Activated CD4-positive, alpha-beta T cell treated with anti-CD3 and anti-CD28 coated beads for 36 hours (primary cell): ENCODE measurements at regions of chr19 and their contacts with region 1.

Region 1: DNA sequence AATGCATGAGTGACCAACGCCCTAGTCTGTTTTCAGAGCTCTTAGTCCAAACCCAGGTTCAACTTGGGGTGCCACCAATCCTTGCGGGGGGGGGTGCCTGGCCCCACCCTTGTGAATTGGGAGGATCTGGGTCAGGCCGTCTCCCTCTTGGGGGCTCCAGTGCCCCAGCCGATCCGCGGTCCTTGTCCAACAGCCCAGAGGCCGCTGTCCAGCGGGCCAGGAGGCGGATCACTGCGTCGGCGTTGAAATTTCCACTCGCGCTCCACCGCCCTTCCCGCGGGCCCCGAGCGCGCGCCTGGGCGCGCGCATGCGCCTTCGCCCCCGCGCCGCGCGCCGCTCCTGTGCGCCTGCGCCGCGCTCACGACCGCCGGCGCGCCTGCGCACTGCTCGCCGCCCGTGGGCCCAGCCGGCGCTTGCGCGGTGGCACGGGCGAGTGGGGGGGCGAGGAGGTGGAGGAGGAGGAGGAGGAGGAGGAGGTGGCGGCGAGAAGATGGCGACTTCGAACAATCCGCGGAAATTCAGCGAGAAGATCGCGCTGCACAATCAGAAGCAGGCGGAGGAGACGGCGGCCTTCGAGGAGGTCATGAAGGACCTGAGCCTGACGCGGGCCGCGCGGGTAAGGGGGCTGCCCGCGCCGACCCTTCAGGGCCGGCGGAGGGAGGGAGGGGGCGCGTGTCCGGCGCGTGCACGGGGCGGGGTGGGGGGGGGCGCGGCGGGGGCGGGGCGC is at the start of gene CRTC1:
- DNase-seq: peak; percentile 95
- ATAC-seq: peak; percentile 91
- H3K4me3 Mint-ChIP-seq: peak within 1 kb of the TSS; percentile 83
- H3K27ac Mint-ChIP-seq: peak within 1 kb of the TSS; percentile 89
- H3K4me1 Mint-ChIP-seq: peaks cover 16% of the 10 kb centered on the region
- H3K27me3 Mint-ChIP-seq: no peaks in the 10 kb centered on the region
- total RNA-seq, gene CRTC1: 5.3 to 9.7 TPM

Region 2: DNA sequence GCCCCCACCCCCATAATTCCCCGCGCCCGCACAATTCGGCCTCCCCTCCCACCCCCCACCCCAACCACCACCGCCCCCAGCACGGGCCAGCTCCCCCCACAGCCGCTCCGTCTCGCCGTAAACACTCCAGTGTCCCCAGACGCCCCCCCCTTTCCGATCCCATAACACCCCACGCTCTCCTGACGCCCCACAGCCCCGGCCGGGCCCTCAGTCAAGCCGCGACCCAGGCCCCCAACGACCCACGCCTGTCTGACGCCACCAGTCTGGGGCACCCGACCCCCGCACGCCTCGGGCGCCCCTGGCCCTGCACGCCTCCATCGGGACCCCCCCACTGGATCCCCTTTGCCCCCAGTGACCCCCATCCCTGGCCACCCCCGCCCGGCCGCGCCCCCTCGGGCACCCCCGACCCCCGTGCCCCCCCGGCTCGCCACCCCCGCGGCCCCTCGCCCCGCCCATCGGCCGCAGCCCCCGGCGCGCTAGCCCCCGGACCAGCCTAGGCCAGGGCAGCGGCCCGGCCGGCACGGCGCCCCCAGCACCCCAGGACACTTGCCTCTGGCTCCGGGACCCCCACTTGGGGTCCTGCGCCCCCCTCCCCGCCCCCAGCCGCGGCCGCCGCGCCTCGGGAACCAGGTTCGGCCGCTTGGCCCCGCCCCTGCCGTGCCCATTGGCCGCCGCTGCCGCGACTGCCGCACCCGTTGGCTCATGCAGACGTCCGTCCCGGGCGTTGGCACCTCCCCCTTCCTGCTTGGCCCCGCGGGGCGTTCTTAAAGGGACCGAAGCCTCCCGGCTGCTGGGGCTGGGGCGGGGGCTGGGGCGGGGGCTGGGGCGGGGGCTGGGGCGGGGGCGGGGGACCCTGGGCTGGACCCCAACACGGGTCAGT is 140.2 kb before region 1 on chr19 and contains the start of gene FKBP8:
- CTCF ChIA-PET with region 1: no interaction called
- POLR2A ChIA-PET with region 1: no interaction called
- intact Hi-C with region 1: loop called in 1 of 2 experiments (anchors 1 kb)
- DNase-seq: peak; percentile 98
- ATAC-seq: peak; percentile 92
- H3K4me3 Mint-ChIP-seq: peak within 1 kb of the TSS; percentile 92
- H3K27ac Mint-ChIP-seq: peak within 1 kb of the TSS; percentile 98
- H3K4me1 Mint-ChIP-seq: peaks cover 25% of the 10 kb centered on the region
- H3K27me3 Mint-ChIP-seq: no peaks in the 10 kb centered on the region
- total RNA-seq, gene FKBP8: 208 to 211 TPM

Region 3: GRCh38 chr19:18612772-18613588 is 70.4 kb before region 1 on chr19 and contains the start of gene TMEM59L:
- CTCF ChIA-PET with region 1: no interaction called
- POLR2A ChIA-PET with region 1: no interaction called
- intact Hi-C with region 1: no loop called
- DNase-seq: peak; percentile 70
- ATAC-seq: peak; percentile 53
- H3K4me3 Mint-ChIP-seq: peak within 1 kb of the TSS; percentile 57
- H3K27ac Mint-ChIP-seq: no peak within 1 kb of the TSS
- H3K4me1 Mint-ChIP-seq: peaks cover 16% of the 10 kb centered on the region
- H3K27me3 Mint-ChIP-seq: peaks cover 64% of the 10 kb centered on the region
- total RNA-seq, gene TMEM59L: 0.11 TPM in 1 of 2 experiments, not detected in the other

Region 4: DNA sequence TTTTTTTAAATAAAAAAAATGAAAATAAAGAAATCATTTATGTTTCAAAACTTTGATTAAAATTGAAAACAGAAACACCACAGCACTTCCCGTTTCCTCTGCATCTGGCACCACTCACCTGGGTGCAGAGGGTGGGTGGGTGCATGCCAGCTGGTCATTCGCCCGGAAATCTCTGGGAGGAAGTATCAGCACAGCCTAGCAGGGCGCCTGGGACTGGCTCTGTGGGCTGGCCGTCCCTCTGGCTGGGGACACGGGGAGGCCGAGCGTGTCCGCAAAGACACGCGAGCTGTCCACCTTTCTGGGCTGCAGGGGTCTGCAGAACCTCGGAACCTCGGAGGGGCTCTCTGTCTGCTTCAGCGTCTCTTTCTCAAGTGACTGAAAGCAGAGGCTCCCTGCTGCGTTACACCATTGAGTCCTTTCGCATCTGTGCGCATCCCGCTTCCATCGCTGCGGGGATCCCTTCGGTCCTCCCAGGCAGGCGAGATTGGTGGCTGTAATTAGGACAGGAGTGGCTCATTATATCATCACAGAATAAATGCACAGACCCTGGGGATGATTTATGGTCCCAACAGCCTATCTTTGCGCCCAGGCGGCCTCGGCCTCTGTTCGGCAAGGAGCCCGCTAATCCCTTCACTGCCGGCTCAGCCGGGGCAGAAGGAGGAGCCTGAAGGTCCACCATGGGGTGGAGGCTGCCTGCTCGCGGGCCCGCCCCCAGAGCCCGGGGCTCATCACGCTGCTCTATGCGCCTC is 17.3 kb after region 1 on chr19:
- CTCF ChIA-PET with region 1: no interaction called
- POLR2A ChIA-PET with region 1: no interaction called
- intact Hi-C with region 1: loop called in 1 of 2 experiments (anchors 1 kb)
- DNase-seq: peak; percentile 84
- ATAC-seq: peak; percentile 94
- H3K4me3 Mint-ChIP-seq: peak overlapping the region; percentile 64
- H3K27ac Mint-ChIP-seq: no peak overlapping the region
- H3K4me1 Mint-ChIP-seq: peaks cover 31% of the 10 kb centered on the region
- H3K27me3 Mint-ChIP-seq: no peaks in the 10 kb centered on the region

Region 5: GRCh38 chr19:18831524-18832305 is 148.3 kb after region 1 on chr19 and contains the start of gene UPF1:
- CTCF ChIA-PET with region 1: no interaction called
- POLR2A ChIA-PET with region 1: no interaction called
- intact Hi-C with region 1: loop called in 1 of 2 experiments (anchors 1 kb)
- DNase-seq: peak; percentile 98
- ATAC-seq: peak; percentile 82
- H3K4me3 Mint-ChIP-seq: peak within 1 kb of the TSS; percentile 96
- H3K27ac Mint-ChIP-seq: peak within 1 kb of the TSS; percentile 90
- H3K4me1 Mint-ChIP-seq: peaks cover 34% of the 10 kb centered on the region
- H3K27me3 Mint-ChIP-seq: peaks cover 3% of the 10 kb centered on the region
- total RNA-seq, gene UPF1: 72.4 to 74.0 TPM